ENCODE measurements at regions of chr3 and their contacts with region 1.

Region 1: GRCh38 chr3:56682462-56683121 is 473 bp downstream of the TASOR start:
- DNase-seq: peak; percentile 79 to 86 (median 85)
- H3K4me3 ChIP-seq: peak overlapping the region; percentile 76 to 90
- H3K4me3 Mint-ChIP-seq: peak overlapping the region; percentile 91 to 98 (median 94)
- H3K27ac ChIP-seq: peak overlapping the region; percentile 96
- H3K27ac Mint-ChIP-seq: peak overlapping the region; percentile 93 to 98 (median 96)
- H3K4me1 ChIP-seq: peaks cover 55% of the 10 kb centered on the region
- H3K4me1 Mint-ChIP-seq: peaks cover 28 to 59% (median 42%) of the 10 kb centered on the region in 4 donors
- H3K27me3 ChIP-seq: no peaks in the 10 kb centered on the region
- H3K27me3 Mint-ChIP-seq: no peaks in the 10 kb centered on the region

Region 2: DNA sequence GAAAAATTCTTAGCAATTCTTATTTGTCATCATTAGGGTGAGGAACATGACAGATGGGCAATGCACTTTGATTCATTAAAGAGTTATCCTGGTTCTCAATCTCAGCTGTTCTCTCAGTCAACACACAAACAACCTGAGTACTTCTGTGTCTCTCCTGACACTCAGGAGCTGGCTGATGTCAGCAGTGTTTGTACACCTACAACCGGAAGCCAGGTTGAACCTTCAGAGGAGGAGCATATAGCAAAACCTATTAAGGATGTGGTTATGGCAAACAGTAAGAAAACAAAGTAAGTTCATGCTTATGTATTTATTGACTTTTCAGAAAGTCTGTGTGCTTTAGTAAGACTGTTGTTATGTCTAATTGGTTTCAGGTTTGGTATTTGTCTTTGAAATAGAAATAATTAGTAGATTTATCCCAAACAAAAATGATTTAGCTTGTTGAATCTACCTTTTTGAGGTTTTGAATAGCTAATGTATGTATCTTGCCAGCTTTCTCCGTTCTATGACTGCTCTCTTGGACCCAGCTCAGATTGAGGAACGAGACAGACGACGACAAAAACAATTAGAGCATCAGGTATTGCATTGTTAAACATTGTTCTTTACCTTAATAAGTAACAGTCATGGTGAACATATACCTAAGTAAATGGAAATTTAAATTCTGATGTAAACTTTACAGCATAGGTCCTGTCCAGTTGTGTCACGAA is 89.0 kb before region 1 on chr3:
- CTCF ChIA-PET with region 1: interaction called, 5 read pairs
- POLR2A ChIA-PET with region 1: interaction called, 17 read pairs
- intact Hi-C with region 1: loop called (anchors 5 kb)
- DNase-seq: peak; percentile 72 to 79 (median 78)
- H3K4me3 ChIP-seq: peak overlapping the region; percentile 18 to 23
- H3K4me3 Mint-ChIP-seq: peak overlapping the region; percentile 63 to 89 (median 80)
- H3K27ac ChIP-seq: peak overlapping the region; percentile 56
- H3K27ac Mint-ChIP-seq: peak overlapping the region; percentile 88 to 98 (median 96)
- H3K4me1 ChIP-seq: peaks cover 74% of the 10 kb centered on the region
- H3K4me1 Mint-ChIP-seq: peaks cover 53 to 79% (median 63%) of the 10 kb centered on the region in 4 donors
- H3K27me3 ChIP-seq: no peaks in the 10 kb centered on the region
- H3K27me3 Mint-ChIP-seq: no peaks in the 10 kb centered on the region

Region 3: DNA sequence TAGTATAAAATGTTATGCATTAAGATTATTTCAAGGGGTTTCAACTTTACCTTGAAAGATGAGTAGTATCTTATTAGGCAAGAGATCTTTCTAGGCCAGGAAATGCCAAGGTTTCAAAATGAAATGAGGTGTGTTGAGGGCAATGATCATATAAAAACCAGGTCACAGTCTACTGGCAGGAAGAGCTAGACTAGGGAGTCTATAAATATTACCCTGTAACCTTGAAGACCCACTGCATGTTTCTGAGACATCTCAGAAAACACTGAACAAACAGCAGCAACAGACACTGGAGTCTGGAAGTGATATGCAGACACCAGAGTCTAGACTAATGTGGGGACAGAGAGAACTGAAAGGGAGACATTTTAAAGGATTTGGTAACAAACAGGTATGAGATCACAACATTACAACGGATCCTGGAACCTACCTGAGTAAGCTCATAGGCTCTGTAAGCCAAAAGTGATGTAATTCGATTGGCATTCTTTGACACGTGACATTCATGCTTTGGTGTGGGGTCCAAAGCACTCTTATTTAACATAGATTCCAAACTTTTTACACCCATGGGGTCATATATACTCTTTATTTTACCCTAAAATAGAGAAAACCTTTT is 14.5 kb before region 1 on chr3:
- CTCF ChIA-PET with region 1: interaction called, 8 read pairs
- POLR2A ChIA-PET with region 1: interaction called, 15 read pairs
- intact Hi-C with region 1: no loop called
- DNase-seq: peak in 3 of 5 donors; percentile 12 to 44 (median 18)
- H3K4me3 ChIP-seq: no peak overlapping the region
- H3K4me3 Mint-ChIP-seq: peak overlapping the region in 4 of 8 donors; percentile 26 to 58 (median 42)
- H3K27ac ChIP-seq: no peak overlapping the region
- H3K27ac Mint-ChIP-seq: peak overlapping the region in 6 of 7 donors; percentile 59 to 77 (median 65)
- H3K4me1 ChIP-seq: peaks cover 13% of the 10 kb centered on the region
- H3K4me1 Mint-ChIP-seq: peaks cover 20 to 36% (median 28%) of the 10 kb centered on the region in 4 donors
- H3K27me3 ChIP-seq: no peaks in the 10 kb centered on the region
- H3K27me3 Mint-ChIP-seq: no peaks in the 10 kb centered on the region

Region 4: GRCh38 chr3:56693750-56694149 is 11.2 kb after region 1 on chr3:
- CTCF ChIA-PET with region 1: interaction called, 5 read pairs
- POLR2A ChIA-PET with region 1: interaction called, 113 read pairs
- intact Hi-C with region 1: loop called (anchors 2 kb)
- DNase-seq: no peak
- H3K4me3 ChIP-seq: no peak overlapping the region
- H3K4me3 Mint-ChIP-seq: peak overlapping the region in 7 of 8 donors; percentile 37 to 86 (median 80)
- H3K27ac ChIP-seq: no peak overlapping the region
- H3K27ac Mint-ChIP-seq: peak overlapping the region in 6 of 7 donors; percentile 3 to 86 (median 70)
- H3K4me1 ChIP-seq: peaks cover 38% of the 10 kb centered on the region
- H3K4me1 Mint-ChIP-seq: peaks cover 36 to 46% (median 41%) of the 10 kb centered on the region in 4 donors
- H3K27me3 ChIP-seq: no peaks in the 10 kb centered on the region
- H3K27me3 Mint-ChIP-seq: no peaks in the 10 kb centered on the region

Region 5: GRCh38 chr3:57597122-57597923 is 914.7 kb after region 1 on chr3 and contains the start of gene ARF4:
- CTCF ChIA-PET with region 1: no interaction called
- POLR2A ChIA-PET with region 1: interaction called, 9 read pairs
- intact Hi-C with region 1: loop called (anchors 1 kb)
- DNase-seq: peak; percentile 100
- H3K4me3 ChIP-seq: peak within 1 kb of the TSS; percentile 72 to 95
- H3K4me3 Mint-ChIP-seq: peak within 1 kb of the TSS; percentile 85 to 99 (median 99)
- H3K27ac ChIP-seq: peak within 1 kb of the TSS; percentile 100
- H3K27ac Mint-ChIP-seq: peak within 1 kb of the TSS; percentile 99 to 100 (median 100)
- H3K4me1 ChIP-seq: peaks cover 62% of the 10 kb centered on the region
- H3K4me1 Mint-ChIP-seq: peaks cover 34 to 72% (median 48%) of the 10 kb centered on the region in 4 donors
- H3K27me3 ChIP-seq: no peaks in the 10 kb centered on the region
- H3K27me3 Mint-ChIP-seq: no peaks in the 10 kb centered on the region
- total RNA-seq, gene ARF4: 55.8 to 58.5 TPM

Measured in CD4-positive, alpha-beta memory T cell (primary cell).